CD8-positive, alpha-beta T cell (primary cell): ENCODE measurements at regions of chr3 and their contacts with region 1.

Region 1: DNA sequence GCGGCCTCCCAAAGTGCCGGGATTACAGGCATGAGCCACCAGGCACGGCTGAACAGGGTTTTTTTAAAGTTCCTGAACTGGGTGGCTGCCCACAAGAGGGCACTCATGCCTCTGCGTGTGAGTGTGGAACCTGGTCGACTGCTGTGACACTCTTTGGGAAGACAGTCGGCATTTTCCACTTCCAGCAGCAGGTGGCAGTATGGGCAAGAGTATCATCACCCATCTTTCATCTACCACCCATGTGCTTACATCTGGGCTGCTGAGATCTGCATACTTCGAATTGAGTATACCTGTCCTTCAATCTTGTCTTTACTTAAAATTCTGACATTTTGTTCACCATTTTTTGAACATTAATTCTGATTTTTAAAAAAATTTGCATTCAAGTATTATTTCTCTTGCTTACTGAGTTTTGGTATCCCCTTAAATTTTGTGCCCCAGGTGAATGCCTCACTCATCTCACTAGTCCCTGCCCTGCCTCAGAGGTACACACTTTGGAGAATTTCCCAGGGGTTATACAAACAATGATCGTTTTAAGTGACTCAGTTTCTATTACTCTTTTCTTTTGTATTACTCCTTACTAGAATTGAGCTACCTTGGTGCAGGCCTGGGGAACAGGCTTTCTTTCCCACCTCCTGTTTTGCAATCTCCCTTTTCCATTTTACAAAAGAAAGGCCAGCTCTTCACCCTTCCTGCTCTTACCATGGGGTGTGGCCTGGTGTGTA is 11.8 kb downstream of the CLEC3B start:
- DNase-seq: peak; percentile 83 to 95 (median 90)
- ATAC-seq: peak; percentile 95
- H3K4me3 ChIP-seq: no peak overlapping the region
- H3K4me3 Mint-ChIP-seq: no peak overlapping the region
- H3K27ac ChIP-seq: no peak overlapping the region
- H3K27ac Mint-ChIP-seq: no peak overlapping the region
- H3K4me1 ChIP-seq: peaks cover 17% of the 10 kb centered on the region
- H3K4me1 Mint-ChIP-seq: peaks cover 41% of the 10 kb centered on the region
- H3K27me3 ChIP-seq: no peaks in the 10 kb centered on the region
- H3K27me3 Mint-ChIP-seq: peaks cover 36% of the 10 kb centered on the region
- CTCF ChIP-seq: peak; percentile 87

Region 2: GRCh38 chr3:44870381-44871078 is 167.4 kb before region 1 on chr3:
- CTCF ChIA-PET with region 1: no interaction called
- POLR2A ChIA-PET with region 1: no interaction called
- intact Hi-C with region 1: no loop called
- DNase-seq: no peak
- ATAC-seq: no peak
- H3K4me3 ChIP-seq: no peak overlapping the region
- H3K4me3 Mint-ChIP-seq: no peak overlapping the region
- H3K27ac ChIP-seq: no peak overlapping the region
- H3K27ac Mint-ChIP-seq: no peak overlapping the region
- H3K4me1 ChIP-seq: peaks cover 7% of the 10 kb centered on the region
- H3K4me1 Mint-ChIP-seq: peaks cover 19% of the 10 kb centered on the region
- H3K27me3 ChIP-seq: no peaks in the 10 kb centered on the region
- H3K27me3 Mint-ChIP-seq: no peaks in the 10 kb centered on the region
- CTCF ChIP-seq: no peak

Region 3: GRCh38 chr3:45167011-45167911 is 129.4 kb after region 1 on chr3:
- CTCF ChIA-PET with region 1: interaction called, 4 read pairs
- POLR2A ChIA-PET with region 1: interaction called, 3 read pairs
- intact Hi-C with region 1: loop called in 1 of 2 experiments (anchors 1 kb)
- DNase-seq: peak; percentile 55 to 87 (median 78)
- ATAC-seq: peak; percentile 97
- H3K4me3 ChIP-seq: peak overlapping the region in 1 of 2 experiments; percentile 7
- H3K4me3 Mint-ChIP-seq: peak overlapping the region; percentile 69
- H3K27ac ChIP-seq: peak overlapping the region; percentile 11 to 21
- H3K27ac Mint-ChIP-seq: peak overlapping the region; percentile 77
- H3K4me1 ChIP-seq: peaks cover 22% of the 10 kb centered on the region
- H3K4me1 Mint-ChIP-seq: peaks cover 20% of the 10 kb centered on the region
- H3K27me3 ChIP-seq: no peaks in the 10 kb centered on the region
- H3K27me3 Mint-ChIP-seq: peaks cover 5% of the 10 kb centered on the region
- CTCF ChIP-seq: no peak

Region 4: DNA sequence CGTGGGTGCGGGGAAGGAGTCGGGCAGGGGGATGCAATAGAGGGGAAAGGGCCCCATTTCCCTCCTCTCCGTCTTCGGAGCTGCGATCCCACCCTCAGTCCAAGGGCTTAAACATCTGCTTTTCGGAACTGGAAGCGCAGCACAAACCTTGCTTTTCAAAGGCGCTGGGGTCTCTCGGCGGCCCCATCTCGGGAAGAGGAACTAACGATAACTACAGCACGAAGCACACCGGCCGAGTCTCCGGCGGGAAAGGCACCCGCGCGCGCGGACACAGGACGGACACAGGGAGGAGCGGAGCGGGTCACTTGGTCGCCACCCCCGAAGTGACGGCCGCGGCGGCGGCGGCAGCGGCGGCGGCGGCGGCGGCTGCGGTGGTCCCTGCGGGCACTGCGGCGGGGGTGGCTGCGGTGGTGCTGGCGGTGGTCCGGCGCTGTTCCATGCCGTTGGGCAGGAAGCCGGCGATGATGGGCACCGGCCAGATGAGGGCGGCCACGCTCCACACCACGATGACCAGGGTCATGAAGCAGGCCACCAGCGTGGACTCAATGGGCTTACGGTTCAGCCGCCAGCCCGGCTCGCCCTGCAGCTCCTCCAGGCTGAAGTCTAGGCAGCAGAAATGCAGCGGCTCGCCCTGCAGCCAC is 187.0 kb after region 1 on chr3:
- CTCF ChIA-PET with region 1: interaction called, 12 read pairs
- POLR2A ChIA-PET with region 1: no interaction called
- intact Hi-C with region 1: no loop called
- DNase-seq: peak in 4 of 9 experiments; percentile 9 to 50 (median 24)
- ATAC-seq: no peak
- H3K4me3 ChIP-seq: no peak overlapping the region
- H3K4me3 Mint-ChIP-seq: peak overlapping the region; percentile 80
- H3K27ac ChIP-seq: no peak overlapping the region
- H3K27ac Mint-ChIP-seq: no peak overlapping the region
- H3K4me1 ChIP-seq: peaks cover 8% of the 10 kb centered on the region
- H3K4me1 Mint-ChIP-seq: peaks cover 11% of the 10 kb centered on the region
- H3K27me3 ChIP-seq: peaks cover 22 to 28% of the 10 kb centered on the region in 2 experiments
- H3K27me3 Mint-ChIP-seq: peaks cover 64% of the 10 kb centered on the region
- CTCF ChIP-seq: no peak

Region 5: GRCh38 chr3:45341876-45342275 is 304.0 kb after region 1 on chr3:
- CTCF ChIA-PET with region 1: interaction called, 3 read pairs
- POLR2A ChIA-PET with region 1: no interaction called
- intact Hi-C with region 1: loop called in 1 of 2 experiments (anchors 1 kb)
- DNase-seq: no peak
- ATAC-seq: no peak
- H3K4me3 ChIP-seq: no peak overlapping the region
- H3K4me3 Mint-ChIP-seq: no peak overlapping the region
- H3K27ac ChIP-seq: no peak overlapping the region
- H3K27ac Mint-ChIP-seq: no peak overlapping the region
- H3K4me1 ChIP-seq: no peaks in the 10 kb centered on the region
- H3K4me1 Mint-ChIP-seq: no peaks in the 10 kb centered on the region
- H3K27me3 ChIP-seq: peaks cover 0 to 2% of the 10 kb centered on the region in 2 experiments
- H3K27me3 Mint-ChIP-seq: no peaks in the 10 kb centered on the region
- CTCF ChIP-seq: no peak

Region 6: DNA sequence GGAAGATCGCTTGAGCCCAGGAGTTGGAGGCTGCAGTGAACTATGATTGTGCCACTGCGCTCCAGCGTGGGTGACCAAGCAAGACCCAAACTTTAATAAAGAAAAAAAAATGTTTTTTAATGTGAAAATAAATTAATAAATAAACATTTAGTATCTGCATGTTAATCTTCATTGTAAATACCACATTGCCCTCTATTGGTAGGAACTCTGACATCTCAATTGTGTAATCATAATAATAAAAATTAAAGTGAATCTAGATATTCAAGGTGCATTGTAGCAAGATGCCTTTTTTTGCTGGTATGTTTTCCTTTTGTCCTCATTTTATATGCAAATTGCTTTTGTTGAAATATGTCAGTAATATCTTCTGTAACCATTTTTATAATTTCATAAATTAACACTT is 461.6 kb after region 1 on chr3:
- CTCF ChIA-PET with region 1: interaction called, 6 read pairs
- POLR2A ChIA-PET with region 1: no interaction called
- intact Hi-C with region 1: loop called (anchors 1 to 2 kb)
- DNase-seq: peak in 2 of 9 experiments; percentile 12 to 34
- ATAC-seq: no peak
- H3K4me3 ChIP-seq: no peak overlapping the region
- H3K4me3 Mint-ChIP-seq: no peak overlapping the region
- H3K27ac ChIP-seq: no peak overlapping the region
- H3K27ac Mint-ChIP-seq: no peak overlapping the region
- H3K4me1 ChIP-seq: peaks cover 26% of the 10 kb centered on the region
- H3K4me1 Mint-ChIP-seq: peaks cover 26% of the 10 kb centered on the region
- H3K27me3 ChIP-seq: no peaks in the 10 kb centered on the region
- H3K27me3 Mint-ChIP-seq: no peaks in the 10 kb centered on the region
- CTCF ChIP-seq: peak; percentile 18

Region 7: DNA sequence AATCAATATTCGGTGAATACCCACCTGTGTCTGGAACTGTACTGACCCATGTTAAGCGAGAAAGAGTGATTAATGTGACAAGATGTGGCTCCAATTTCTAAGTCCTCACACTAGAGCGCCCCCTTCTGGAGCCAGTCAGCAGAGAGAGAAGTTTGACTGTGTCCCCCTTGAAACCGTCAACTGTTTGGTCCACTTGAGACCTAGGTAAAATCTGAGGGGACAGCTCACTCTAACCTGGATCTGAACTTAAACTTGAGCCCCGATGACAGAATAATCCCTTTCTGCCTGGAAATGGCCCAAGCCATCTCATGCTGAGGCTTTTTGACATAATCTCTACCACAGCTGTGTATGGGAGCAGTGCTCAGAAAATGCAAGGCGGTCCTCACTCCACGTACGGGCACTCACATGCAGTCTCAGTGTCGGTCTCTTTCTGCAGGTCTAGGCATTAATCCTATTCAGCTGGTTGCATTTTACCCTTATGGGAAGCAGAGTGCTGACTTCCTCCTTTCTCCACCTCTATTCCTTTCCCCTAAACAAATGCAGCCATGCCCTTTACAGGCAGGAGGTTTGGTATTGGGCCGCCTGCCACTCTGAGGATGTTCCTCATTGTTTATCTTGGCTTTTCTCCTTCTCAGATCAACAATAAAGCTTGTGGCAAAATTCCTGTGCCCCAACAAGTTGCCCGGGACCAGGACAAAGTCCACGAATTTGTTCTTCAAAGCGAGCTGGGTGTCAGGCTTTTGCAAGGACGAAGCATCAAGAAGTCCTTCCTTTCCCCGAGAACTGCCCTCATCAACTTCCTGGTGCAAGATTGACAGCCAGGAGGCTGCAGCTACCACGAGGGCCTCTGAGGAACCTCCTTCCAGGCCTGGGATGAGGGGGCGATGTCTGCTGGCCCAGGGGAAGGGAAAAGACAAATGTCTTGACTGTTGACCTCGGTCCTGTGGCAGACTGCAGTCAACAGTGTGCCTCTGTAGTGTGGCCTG is 509.1 kb after region 1 on chr3:
- CTCF ChIA-PET with region 1: interaction called, 4 read pairs
- POLR2A ChIA-PET with region 1: no interaction called
- intact Hi-C with region 1: loop called in 1 of 2 experiments (anchors 1 kb)
- DNase-seq: peak in 4 of 9 experiments; percentile 21 to 41 (median 34)
- ATAC-seq: no peak
- H3K4me3 ChIP-seq: no peak overlapping the region
- H3K4me3 Mint-ChIP-seq: no peak overlapping the region
- H3K27ac ChIP-seq: no peak overlapping the region
- H3K27ac Mint-ChIP-seq: no peak overlapping the region
- H3K4me1 ChIP-seq: no peaks in the 10 kb centered on the region
- H3K4me1 Mint-ChIP-seq: no peaks in the 10 kb centered on the region
- H3K27me3 ChIP-seq: no peaks in the 10 kb centered on the region
- H3K27me3 Mint-ChIP-seq: no peaks in the 10 kb centered on the region
- CTCF ChIP-seq: peak; percentile 38

Region 8: DNA sequence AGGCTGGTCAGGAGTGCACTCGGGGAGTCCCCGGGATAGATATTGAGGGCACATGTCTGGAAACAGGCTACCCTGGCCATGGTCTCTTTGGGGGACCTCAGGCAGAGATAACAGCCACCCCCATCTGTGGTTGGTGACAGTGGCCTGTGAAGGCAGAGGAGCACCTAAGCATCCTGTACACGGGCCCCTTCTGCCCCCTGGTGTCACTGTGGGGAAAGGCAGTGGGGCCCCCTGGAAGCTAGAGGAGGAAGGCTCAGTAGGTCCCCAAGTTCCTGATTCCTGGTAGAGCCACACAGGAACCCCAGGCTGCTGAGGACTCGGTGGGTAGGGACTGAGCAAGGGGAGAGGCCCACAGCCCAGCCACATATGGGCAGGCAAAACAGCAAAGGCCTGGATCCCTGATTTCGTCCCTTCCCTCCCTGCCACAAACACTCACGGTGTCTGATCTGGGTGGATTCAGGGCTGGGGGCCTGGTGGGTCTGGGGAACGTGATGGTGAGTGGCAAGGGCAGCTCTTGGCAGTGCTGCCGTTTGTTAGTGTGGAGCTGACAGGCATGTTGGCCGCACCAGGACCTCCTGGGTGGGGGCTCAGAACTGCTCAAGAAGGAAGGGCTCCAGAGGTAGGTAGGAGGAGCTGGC is 891.3 kb after region 1 on chr3:
- CTCF ChIA-PET with region 1: interaction called, 3 read pairs
- POLR2A ChIA-PET with region 1: no interaction called
- intact Hi-C with region 1: loop called in 1 of 2 experiments (anchors 2 kb)
- DNase-seq: peak; percentile 39 to 78 (median 66)
- ATAC-seq: peak; percentile 97
- H3K4me3 ChIP-seq: no peak overlapping the region
- H3K4me3 Mint-ChIP-seq: no peak overlapping the region
- H3K27ac ChIP-seq: no peak overlapping the region
- H3K27ac Mint-ChIP-seq: peak overlapping the region; percentile 63
- H3K4me1 ChIP-seq: no peaks in the 10 kb centered on the region
- H3K4me1 Mint-ChIP-seq: peaks cover 4% of the 10 kb centered on the region
- H3K27me3 ChIP-seq: no peaks in the 10 kb centered on the region
- H3K27me3 Mint-ChIP-seq: no peaks in the 10 kb centered on the region
- CTCF ChIP-seq: peak; percentile 72